Activated CD8-positive, alpha-beta T cell treated with anti-CD3 and anti-CD28 coated beads for 36 hours (primary cell): ENCODE measurements at regions of chr15 and their contacts with region 1.

Region 1: GRCh38 chr15:41774062-41774881 is at the start of gene MAPKBP1:
- DNase-seq: peak; percentile 99
- ATAC-seq: peak; percentile 92
- H3K4me3 Mint-ChIP-seq: peak within 1 kb of the TSS; percentile 91
- H3K27ac Mint-ChIP-seq: peak within 1 kb of the TSS; percentile 92
- H3K4me1 Mint-ChIP-seq: peaks cover 56% of the 10 kb centered on the region
- H3K27me3 Mint-ChIP-seq: no peaks in the 10 kb centered on the region
- CTCF ChIP-seq: peak; percentile 59
- total RNA-seq, gene MAPKBP1: 16.6 to 17.2 TPM

Region 2: DNA sequence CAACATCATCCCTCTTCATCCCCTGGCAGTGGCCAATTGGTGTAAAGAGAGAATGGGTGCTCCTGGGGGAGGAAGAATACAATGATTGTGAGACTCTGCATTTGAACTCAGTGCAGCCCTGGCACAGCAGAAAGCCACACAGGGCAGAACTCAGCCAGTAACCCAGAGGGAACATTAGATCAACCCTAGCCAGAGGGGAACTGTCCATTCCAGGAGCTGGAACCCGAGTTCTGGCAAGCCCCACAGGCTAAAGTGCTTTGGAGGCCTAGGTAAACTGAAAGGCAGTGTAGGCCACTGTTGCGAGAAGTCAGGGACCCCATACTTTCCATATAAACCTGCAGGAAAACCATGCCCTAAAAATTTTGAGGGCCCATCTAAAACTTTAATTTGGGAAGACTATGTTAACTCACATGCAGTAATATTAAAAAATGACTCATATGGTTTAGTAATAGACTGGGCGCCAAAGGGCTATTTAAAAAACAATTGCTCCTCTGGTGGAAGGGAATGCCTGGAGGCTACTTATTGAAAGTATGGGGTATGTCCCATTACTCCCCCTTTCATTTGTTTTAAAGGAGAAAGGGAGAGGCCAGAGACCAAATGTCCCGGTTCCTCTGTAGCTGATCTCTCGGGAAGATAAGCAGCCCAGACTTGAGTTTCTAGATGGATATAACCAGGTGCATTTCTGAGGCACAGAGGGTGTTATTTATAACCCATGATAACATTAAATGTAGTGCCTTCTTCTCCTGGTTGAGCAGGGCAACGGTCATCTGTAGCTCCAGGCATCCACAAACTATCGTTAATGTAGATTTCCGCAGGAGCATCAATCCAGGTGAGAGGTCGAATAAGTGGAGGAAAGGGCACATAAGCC is 1085.1 kb before region 1 on chr15:
- CTCF ChIA-PET with region 1: no interaction called
- POLR2A ChIA-PET with region 1: no interaction called
- intact Hi-C with region 1: no loop called
- DNase-seq: no peak
- ATAC-seq: no peak
- H3K4me3 Mint-ChIP-seq: no peak overlapping the region
- H3K27ac Mint-ChIP-seq: no peak overlapping the region
- H3K4me1 Mint-ChIP-seq: peaks cover 8% of the 10 kb centered on the region
- H3K27me3 Mint-ChIP-seq: no peaks in the 10 kb centered on the region
- CTCF ChIP-seq: no peak

Region 3: DNA sequence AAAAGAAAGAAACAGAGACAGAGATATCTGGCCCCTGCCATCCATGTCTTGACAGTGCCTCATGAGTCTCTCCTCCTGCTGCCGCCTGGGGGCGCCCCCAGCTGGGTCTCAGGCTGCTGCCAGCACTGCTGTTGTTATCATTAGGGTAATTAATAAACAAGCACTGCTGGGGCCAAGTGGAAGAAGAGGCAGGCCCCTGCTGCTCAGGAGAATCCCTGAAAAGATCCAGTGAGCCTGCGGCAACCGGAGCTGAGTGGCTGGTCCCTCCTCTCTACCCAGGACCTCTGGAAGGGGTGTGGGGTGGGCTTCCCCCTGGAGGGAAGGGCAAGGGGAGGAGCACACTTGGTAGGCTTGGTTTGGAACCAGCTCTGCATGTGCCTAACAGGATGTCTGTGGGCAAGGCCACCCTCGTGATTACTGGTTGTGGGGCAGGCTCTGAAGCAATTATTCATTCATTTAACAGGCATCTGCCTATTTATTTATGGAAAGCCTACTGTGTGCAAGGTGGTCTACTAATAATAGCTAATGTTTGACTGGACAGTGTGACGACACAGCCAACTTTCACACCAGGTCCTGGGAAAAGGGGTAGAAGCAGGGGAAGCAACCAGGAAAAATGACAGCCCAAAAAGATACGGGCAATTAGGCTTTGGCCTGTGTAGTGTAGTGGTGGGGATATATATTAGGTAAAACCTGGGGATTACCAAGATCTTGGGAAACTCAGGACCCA is 216.4 kb before region 1 on chr15:
- CTCF ChIA-PET with region 1: interaction called, 11 read pairs
- POLR2A ChIA-PET with region 1: no interaction called
- intact Hi-C with region 1: no loop called
- DNase-seq: peak; percentile 84
- ATAC-seq: peak; percentile 85
- H3K4me3 Mint-ChIP-seq: peak overlapping the region; percentile 69
- H3K27ac Mint-ChIP-seq: peak overlapping the region; percentile 69
- H3K4me1 Mint-ChIP-seq: peaks cover 14% of the 10 kb centered on the region
- H3K27me3 Mint-ChIP-seq: peaks cover 14% of the 10 kb centered on the region
- CTCF ChIP-seq: peak; percentile 83

Region 4: GRCh38 chr15:41671656-41672648 is 102.3 kb before region 1 on chr15:
- CTCF ChIA-PET with region 1: no interaction called
- POLR2A ChIA-PET with region 1: no interaction called
- intact Hi-C with region 1: no loop called
- DNase-seq: no peak
- ATAC-seq: no peak
- H3K4me3 Mint-ChIP-seq: no peak overlapping the region
- H3K27ac Mint-ChIP-seq: no peak overlapping the region
- H3K4me1 Mint-ChIP-seq: peaks cover 46% of the 10 kb centered on the region
- H3K27me3 Mint-ChIP-seq: no peaks in the 10 kb centered on the region
- CTCF ChIP-seq: no peak

Region 5: DNA sequence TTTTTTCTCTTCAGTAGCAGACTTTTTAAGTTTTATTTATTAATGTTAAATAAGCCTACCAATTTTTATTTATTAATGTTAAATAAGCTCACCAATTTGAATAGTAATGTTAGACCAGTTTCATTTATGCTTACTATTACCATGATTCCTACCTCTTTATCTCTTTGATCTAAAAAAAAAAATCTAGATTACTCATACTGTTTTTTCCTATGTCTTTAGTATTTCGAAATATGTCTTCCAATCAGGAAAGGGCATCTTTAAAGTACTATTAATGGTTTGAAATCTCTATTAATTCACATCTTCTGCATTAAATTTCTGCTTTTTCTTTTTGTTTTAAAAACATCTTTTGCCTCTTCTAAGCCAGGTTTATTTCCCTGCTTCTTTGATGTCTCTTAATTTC is 27.5 kb before region 1 on chr15:
- CTCF ChIA-PET with region 1: interaction called, 11 read pairs
- POLR2A ChIA-PET with region 1: interaction called, 3 read pairs
- intact Hi-C with region 1: no loop called
- DNase-seq: no peak
- ATAC-seq: no peak
- H3K4me3 Mint-ChIP-seq: no peak overlapping the region
- H3K27ac Mint-ChIP-seq: peak overlapping the region; percentile 30
- H3K4me1 Mint-ChIP-seq: peaks cover 3% of the 10 kb centered on the region
- H3K27me3 Mint-ChIP-seq: no peaks in the 10 kb centered on the region
- CTCF ChIP-seq: no peak

Region 6: GRCh38 chr15:41795996-41796856 is 22.0 kb after region 1 on chr15:
- CTCF ChIA-PET with region 1: interaction called, 337 read pairs
- POLR2A ChIA-PET with region 1: interaction called, 6 read pairs
- intact Hi-C with region 1: no loop called
- DNase-seq: no peak
- ATAC-seq: no peak
- H3K4me3 Mint-ChIP-seq: no peak overlapping the region
- H3K27ac Mint-ChIP-seq: no peak overlapping the region
- H3K4me1 Mint-ChIP-seq: peaks cover 38% of the 10 kb centered on the region
- H3K27me3 Mint-ChIP-seq: no peaks in the 10 kb centered on the region
- CTCF ChIP-seq: no peak

Region 7: DNA sequence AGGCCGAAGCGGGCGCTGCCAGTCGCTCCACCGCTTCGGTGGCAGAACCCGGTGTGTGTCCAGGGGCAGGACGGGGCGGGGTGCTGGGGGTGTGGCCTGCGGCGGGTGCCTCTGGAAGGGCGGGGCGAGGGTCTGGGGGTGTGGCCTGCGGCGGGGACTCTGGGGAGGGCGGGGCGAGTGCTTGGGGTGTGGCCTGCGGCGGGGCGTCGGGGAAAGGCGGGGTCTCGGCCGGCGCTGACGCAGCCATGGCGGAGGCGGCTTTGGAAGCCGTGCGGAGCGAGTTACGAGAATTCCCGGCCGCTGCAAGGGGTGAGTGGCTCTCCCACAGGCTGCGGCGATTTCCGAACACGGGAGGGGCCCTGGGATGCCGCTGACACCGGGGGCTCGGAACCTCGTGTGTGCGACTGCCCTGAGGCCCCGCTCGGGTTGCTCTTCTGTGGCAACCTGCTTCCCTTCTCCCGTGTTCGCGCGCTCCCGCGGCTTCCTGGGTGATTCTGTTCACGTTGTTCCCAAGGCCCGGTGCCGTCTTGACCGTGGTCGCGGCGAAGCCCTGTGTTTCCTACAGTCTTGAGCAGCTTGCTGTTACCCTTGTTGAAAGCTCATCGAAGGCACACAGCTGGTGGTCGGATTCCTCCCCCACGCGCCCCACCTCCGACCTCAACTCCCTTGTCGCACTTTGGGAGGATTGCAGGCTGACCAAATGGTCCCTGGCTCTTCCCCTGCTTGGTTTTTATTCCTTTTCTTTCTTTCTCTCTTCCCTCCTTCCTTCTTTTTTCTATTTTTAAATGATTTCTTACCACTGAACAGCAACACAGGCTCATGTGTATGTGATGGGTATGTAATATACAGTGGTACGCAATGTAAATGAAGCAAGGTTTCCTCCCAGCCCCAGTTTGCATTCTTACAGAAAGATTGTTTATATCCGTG is 53.9 kb after region 1 on chr15 and contains the start of gene JMJD7:
- CTCF ChIA-PET with region 1: interaction called, 20 read pairs
- POLR2A ChIA-PET with region 1: no interaction called
- intact Hi-C with region 1: no loop called
- DNase-seq: peak; percentile 95
- ATAC-seq: peak; percentile 96
- H3K4me3 Mint-ChIP-seq: peak within 1 kb of the TSS; percentile 90
- H3K27ac Mint-ChIP-seq: peak within 1 kb of the TSS; percentile 84
- H3K4me1 Mint-ChIP-seq: peaks cover 34% of the 10 kb centered on the region
- H3K27me3 Mint-ChIP-seq: no peaks in the 10 kb centered on the region
- CTCF ChIP-seq: no peak
- total RNA-seq, gene JMJD7: 8.2 to 13.2 TPM

Region 8: GRCh38 chr15:41972253-41973242 is 198.3 kb after region 1 on chr15 and contains the start of gene EHD4:
- CTCF ChIA-PET with region 1: interaction called, 11 read pairs
- POLR2A ChIA-PET with region 1: no interaction called
- intact Hi-C with region 1: no loop called
- DNase-seq: peak; percentile 99
- ATAC-seq: peak; percentile 84
- H3K4me3 Mint-ChIP-seq: peak within 1 kb of the TSS; percentile 86
- H3K27ac Mint-ChIP-seq: peak within 1 kb of the TSS; percentile 94
- H3K4me1 Mint-ChIP-seq: peaks cover 41% of the 10 kb centered on the region
- H3K27me3 Mint-ChIP-seq: peaks cover 13% of the 10 kb centered on the region
- CTCF ChIP-seq: no peak
- total RNA-seq, gene EHD4: 22.3 to 22.6 TPM